Endothelial cell of umbilical vein (primary cell): ENCODE measurements at regions of chr2 and their contacts with region 1.

Region 1: GRCh38 chr2:234257856-234258561 is 207.5 kb downstream of the SPP2 start:
- DNase-seq: peak; percentile 96
- H3K4me3 ChIP-seq: no peak overlapping the region
- H3K27ac ChIP-seq: peak overlapping the region; percentile 70
- H3K4me1 ChIP-seq: peaks cover 11% of the 10 kb centered on the region
- H3K27me3 ChIP-seq: no peaks in the 10 kb centered on the region
- CTCF ChIP-seq: peak; percentile 84 to 87
- POLR2A ChIP-seq: peak; percentile 37

Region 2: DNA sequence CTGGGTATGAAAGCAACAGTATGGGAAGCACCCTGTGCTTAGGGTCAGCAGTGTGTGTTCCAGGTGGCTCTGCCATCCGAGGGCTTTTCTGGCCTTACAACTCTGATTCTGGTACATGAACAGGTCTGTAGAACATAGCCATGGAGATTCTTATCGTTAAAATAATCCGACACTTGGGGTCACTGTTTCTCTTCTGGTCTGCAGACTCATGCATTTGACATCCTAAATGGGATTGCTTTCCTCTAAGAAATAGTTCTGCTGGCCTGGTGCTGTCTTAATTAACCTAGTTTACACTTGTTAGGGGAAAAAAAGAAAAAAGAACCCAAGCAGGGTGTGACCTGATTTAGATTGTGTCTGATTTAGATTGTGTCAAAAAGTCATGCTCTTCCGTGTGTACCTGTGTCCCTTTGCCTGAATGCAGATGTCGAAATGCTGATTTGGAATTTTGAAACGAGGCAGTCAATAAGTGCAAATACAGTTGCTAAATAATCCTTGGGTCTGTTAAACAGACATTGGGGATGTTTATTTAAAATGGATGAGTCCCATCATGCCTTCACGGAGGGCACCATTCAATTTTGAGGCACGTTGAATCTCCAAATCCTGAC is 281.2 kb before region 1 on chr2:
- CTCF ChIA-PET with region 1: no interaction called
- POLR2A ChIA-PET with region 1: no interaction called
- dilution Hi-C with region 1: no loop called
- intact Hi-C with region 1: loop called (anchors 1 kb)
- DNase-seq: peak; percentile 57
- H3K4me3 ChIP-seq: no peak overlapping the region
- H3K27ac ChIP-seq: no peak overlapping the region
- H3K4me1 ChIP-seq: peaks cover 13% of the 10 kb centered on the region
- H3K27me3 ChIP-seq: peaks cover 0 to 3% of the 10 kb centered on the region in 2 experiments
- CTCF ChIP-seq: peak; percentile 4 to 22
- POLR2A ChIP-seq: no peak

Region 3: DNA sequence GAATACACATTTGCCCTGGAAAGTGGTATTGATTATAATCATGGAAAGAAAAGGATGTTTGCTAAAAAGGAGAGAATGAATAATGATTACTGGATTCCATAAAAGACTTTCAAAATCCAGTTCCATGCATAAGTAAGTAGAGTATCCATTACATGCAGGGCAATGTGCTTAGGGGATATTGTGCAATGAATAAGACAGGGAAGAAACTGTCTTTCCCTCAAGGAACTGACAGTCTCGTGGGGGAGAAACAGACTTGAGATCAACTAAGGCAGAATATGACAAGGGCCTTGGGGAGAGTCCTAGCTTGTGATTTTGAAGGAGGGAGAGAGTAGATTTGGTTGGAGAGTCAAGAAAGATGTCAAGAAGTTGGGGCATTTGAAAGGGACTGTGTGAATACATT is 76.9 kb before region 1 on chr2:
- CTCF ChIA-PET with region 1: no interaction called
- POLR2A ChIA-PET with region 1: no interaction called
- dilution Hi-C with region 1: no loop called
- intact Hi-C with region 1: loop called (anchors 2 kb)
- DNase-seq: no peak
- H3K4me3 ChIP-seq: no peak overlapping the region
- H3K27ac ChIP-seq: no peak overlapping the region
- H3K4me1 ChIP-seq: no peaks in the 10 kb centered on the region
- H3K27me3 ChIP-seq: peaks cover 3 to 20% of the 10 kb centered on the region in 2 experiments
- CTCF ChIP-seq: no peak
- POLR2A ChIP-seq: no peak

Region 4: DNA sequence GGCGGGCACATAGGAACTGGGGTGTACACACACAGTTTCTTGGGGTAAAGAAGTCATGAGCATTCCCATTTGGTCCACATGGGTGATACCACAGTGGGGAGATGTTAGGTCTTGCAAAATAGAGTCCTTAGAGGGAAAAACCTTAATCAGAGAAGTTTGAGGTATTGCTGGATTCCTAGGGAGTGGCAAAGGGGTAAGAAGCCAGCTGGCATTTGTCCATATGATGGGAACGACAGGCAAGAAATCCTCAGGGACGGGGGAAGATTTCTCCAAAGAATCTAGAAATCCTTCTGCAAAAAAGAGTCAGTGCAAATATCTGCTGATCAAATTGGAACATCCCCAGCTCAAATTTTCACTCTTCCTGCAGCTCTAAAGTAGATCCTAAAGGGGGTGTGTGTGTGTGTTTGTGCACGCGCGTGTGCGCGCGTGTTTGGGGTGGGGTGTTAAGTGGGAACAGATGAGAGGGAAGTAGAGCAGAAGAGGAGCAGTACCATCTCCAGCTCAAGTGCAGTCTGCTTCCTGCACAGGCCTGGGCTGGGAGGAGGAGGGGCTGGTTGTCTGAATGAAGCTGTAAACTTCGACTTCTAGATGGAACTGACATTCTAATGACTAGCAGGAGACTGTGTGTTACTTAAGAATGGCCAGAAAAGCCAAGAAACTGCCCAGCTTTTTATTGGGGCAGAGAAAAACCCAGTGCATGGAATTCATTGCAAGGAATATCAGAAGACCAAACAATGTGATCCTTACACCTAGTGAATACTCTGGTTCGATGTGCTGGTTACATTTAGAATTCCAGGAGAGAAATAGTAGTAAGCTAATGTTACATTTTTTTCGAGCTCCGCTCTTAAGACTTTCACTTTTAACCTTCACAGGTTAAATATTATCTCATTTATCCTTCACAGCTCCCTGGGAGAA is 39.5 kb before region 1 on chr2:
- CTCF ChIA-PET with region 1: no interaction called
- POLR2A ChIA-PET with region 1: no interaction called
- dilution Hi-C with region 1: no loop called
- intact Hi-C with region 1: no loop called
- DNase-seq: no peak
- H3K4me3 ChIP-seq: no peak overlapping the region
- H3K27ac ChIP-seq: no peak overlapping the region
- H3K4me1 ChIP-seq: no peaks in the 10 kb centered on the region
- H3K27me3 ChIP-seq: no peaks in the 10 kb centered on the region
- CTCF ChIP-seq: no peak
- POLR2A ChIP-seq: no peak

Region 5: DNA sequence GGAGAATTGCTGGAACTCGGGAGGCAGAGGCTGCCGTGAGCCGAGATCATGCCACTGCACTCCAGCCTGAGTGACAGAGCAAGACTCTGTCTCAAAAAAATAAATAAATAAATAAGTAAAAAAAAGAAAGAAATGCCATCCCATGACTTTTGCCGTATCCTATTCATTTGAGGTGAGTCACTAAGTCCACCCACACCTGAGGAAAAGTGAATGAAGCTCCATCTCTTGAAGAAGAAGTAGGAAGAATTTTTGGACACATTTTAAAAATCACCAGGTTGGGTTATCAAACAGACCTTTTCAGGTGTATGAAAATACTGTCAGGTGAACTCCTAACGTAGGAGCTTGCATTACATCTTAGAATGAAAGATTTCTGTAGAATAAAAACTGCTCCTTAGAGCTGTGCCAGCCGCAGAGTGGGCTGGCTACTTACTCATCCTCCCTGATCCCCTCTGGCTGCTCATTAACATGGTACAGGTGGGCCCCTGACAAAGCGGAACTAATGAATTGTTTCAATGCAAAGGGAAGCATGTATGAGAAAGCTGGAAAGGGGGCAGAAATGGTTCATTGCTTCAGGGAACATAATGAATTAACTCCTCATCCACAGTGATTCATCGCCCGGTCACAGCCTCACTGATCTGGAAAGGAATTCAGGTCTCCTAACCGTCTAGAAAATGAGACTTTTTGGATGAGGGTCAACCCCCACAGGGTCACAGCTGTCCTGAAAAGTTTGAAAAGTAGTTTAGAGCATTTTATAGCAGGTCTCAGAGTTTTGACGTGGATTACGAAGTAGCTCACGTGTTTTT is 16.2 kb before region 1 on chr2:
- CTCF ChIA-PET with region 1: interaction called, 5 read pairs
- POLR2A ChIA-PET with region 1: no interaction called
- dilution Hi-C with region 1: no loop called
- intact Hi-C with region 1: loop called (anchors 1 kb)
- DNase-seq: peak; percentile 30
- H3K4me3 ChIP-seq: no peak overlapping the region
- H3K27ac ChIP-seq: no peak overlapping the region
- H3K4me1 ChIP-seq: peaks cover 32% of the 10 kb centered on the region
- H3K27me3 ChIP-seq: no peaks in the 10 kb centered on the region
- CTCF ChIP-seq: no peak
- POLR2A ChIP-seq: no peak

Region 6: GRCh38 chr2:234425619-234426603 is 167.9 kb after region 1 on chr2:
- CTCF ChIA-PET with region 1: no interaction called
- POLR2A ChIA-PET with region 1: no interaction called
- dilution Hi-C with region 1: no loop called
- intact Hi-C with region 1: loop called (anchors 5 kb)
- DNase-seq: no peak
- H3K4me3 ChIP-seq: no peak overlapping the region
- H3K27ac ChIP-seq: no peak overlapping the region
- H3K4me1 ChIP-seq: peaks cover 36% of the 10 kb centered on the region
- H3K27me3 ChIP-seq: no peaks in the 10 kb centered on the region
- CTCF ChIP-seq: no peak
- POLR2A ChIP-seq: no peak

Region 7: DNA sequence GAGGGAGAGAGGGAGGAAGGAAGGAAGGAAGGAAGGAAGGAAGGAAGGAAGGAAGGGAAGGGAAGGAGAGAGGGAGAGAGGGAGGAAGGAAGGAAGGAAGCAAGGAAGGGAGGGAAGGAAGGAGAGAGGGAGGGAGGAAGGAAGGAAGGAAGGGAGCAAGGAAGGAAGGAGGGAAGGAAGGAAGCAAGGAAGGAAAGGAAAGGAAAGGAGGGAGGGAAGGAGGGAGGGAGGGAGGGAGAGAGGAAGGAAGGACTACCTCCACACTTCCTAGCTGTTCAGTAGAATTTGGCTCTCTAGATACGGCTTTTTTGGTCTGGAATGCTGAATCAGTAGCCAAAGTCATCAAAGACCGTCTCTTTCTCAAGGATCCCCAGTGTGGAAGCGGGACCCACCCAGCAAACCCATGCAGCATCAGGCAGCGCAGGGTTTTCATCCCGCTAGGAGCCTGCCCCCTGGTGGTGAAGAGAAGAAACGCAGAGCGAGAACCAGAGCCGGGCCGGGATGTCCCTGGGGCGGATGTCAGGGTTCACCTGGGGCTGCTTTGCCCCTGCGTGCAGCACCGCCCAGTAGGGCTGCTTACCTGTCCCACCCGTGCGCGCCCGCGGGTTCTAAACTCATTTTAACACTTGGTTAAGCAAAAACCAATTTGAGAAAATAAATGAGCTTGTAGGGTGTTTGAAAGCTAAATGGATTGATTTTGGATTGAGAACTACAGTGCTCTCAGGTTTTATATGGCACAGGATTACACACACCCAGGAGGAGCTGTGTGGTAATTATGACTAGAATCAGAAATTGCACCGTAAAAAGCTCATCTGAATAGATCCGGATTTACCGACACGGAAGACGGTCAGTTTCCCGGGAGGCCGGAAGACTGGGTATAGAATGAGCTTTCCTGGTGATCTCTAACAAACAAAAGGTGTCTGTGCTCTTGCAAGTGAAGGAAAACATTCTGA is 286.9 kb after region 1 on chr2:
- CTCF ChIA-PET with region 1: interaction called, 3 read pairs
- POLR2A ChIA-PET with region 1: no interaction called
- dilution Hi-C with region 1: no loop called
- intact Hi-C with region 1: loop called (anchors 1 kb)
- DNase-seq: peak; percentile 38
- H3K4me3 ChIP-seq: no peak overlapping the region
- H3K27ac ChIP-seq: no peak overlapping the region
- H3K4me1 ChIP-seq: peaks cover 6% of the 10 kb centered on the region
- H3K27me3 ChIP-seq: peaks cover 0 to 6% of the 10 kb centered on the region in 2 experiments
- CTCF ChIP-seq: peak; percentile 71 to 96
- POLR2A ChIP-seq: no peak